Natural killer cell (primary cell): ENCODE measurements at regions of chrX and their contacts with region 1.

Region 1: GRCh38 chrX:1453951-1454785 is 1.5 kb upstream of the ASMTL start:
- DNase-seq: peak; percentile 93
- ATAC-seq: peak; percentile 30 to 43 (median 37)
- H3K4me3 ChIP-seq: peak overlapping the region; percentile 31
- H3K4me3 Mint-ChIP-seq: peak overlapping the region; percentile 26
- H3K27ac ChIP-seq: peak overlapping the region; percentile 80
- H3K27ac Mint-ChIP-seq: peak overlapping the region; percentile 42 to 92
- H3K4me1 ChIP-seq: peaks cover 48% of the 10 kb centered on the region
- H3K4me1 Mint-ChIP-seq: peaks cover 2 to 44% of the 10 kb centered on the region in 2 donors
- H3K27me3 ChIP-seq: no peaks in the 10 kb centered on the region
- H3K27me3 Mint-ChIP-seq: no peaks in the 10 kb centered on the region
- CTCF ChIP-seq: peak; percentile 99

Region 2: DNA sequence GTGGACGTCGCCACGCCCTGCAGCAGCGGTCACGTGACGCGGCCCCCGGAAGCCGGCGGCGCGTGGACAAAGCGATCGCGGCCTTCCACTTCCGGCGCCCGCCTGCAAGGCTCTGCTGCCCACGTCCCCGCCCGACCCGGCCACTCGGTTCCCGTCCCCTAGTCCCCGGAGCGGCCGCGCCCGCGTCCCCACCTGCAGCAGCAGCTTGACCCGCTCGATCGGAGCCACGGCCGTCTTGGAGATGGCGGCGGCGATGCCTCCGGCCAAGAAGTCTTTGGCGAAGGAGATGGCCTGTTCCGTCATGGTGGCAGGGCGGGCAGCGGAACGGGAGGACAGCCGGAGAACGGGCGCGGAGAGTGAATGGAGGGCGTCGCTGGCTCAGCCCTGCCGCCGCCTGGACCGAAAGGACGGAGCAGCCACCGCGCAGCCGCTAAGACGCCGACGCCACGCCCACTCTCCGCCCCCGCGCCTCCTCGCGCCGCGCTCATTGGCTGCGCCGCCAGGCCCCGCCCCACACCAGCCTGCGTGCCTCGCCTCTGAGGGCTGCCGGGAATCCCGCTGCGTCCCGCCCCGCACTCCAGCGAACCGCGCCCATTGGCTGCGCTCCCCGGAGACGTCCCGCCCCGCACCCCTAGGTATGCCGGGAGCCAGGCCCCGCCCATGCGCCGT is 62.3 kb before region 1 on chrX and contains the start of gene SLC25A6:
- intact Hi-C with region 1: loop called (anchors 1 kb)
- DNase-seq: peak; percentile 99 to 100
- ATAC-seq: peak; percentile 93 to 98 (median 93)
- H3K4me3 ChIP-seq: peak within 1 kb of the TSS; percentile 99
- H3K4me3 Mint-ChIP-seq: peak within 1 kb of the TSS; percentile 92
- H3K27ac ChIP-seq: peak within 1 kb of the TSS; percentile 95
- H3K27ac Mint-ChIP-seq: peak within 1 kb of the TSS; percentile 85 to 94
- H3K4me1 ChIP-seq: peaks cover 24% of the 10 kb centered on the region
- H3K4me1 Mint-ChIP-seq: peaks cover 37 to 61% of the 10 kb centered on the region in 2 donors
- H3K27me3 ChIP-seq: no peaks in the 10 kb centered on the region
- H3K27me3 Mint-ChIP-seq: no peaks in the 10 kb centered on the region
- CTCF ChIP-seq: no peak
- total RNA-seq, gene SLC25A6: 157 to 197 (median 178) TPM

Region 3: GRCh38 chrX:1507511-1508463 is 53.6 kb after region 1 on chrX:
- intact Hi-C with region 1: loop called (anchors 1 kb)
- DNase-seq: peak; percentile 71 to 86
- ATAC-seq: peak; percentile 81 to 90 (median 88)
- H3K4me3 ChIP-seq: no peak overlapping the region
- H3K4me3 Mint-ChIP-seq: peak overlapping the region; percentile 73
- H3K27ac ChIP-seq: peak overlapping the region; percentile 43
- H3K27ac Mint-ChIP-seq: no peak overlapping the region
- H3K4me1 ChIP-seq: peaks cover 53% of the 10 kb centered on the region
- H3K4me1 Mint-ChIP-seq: peaks cover 12 to 26% of the 10 kb centered on the region in 2 donors
- H3K27me3 ChIP-seq: no peaks in the 10 kb centered on the region
- H3K27me3 Mint-ChIP-seq: no peaks in the 10 kb centered on the region
- CTCF ChIP-seq: no peak

Region 4: DNA sequence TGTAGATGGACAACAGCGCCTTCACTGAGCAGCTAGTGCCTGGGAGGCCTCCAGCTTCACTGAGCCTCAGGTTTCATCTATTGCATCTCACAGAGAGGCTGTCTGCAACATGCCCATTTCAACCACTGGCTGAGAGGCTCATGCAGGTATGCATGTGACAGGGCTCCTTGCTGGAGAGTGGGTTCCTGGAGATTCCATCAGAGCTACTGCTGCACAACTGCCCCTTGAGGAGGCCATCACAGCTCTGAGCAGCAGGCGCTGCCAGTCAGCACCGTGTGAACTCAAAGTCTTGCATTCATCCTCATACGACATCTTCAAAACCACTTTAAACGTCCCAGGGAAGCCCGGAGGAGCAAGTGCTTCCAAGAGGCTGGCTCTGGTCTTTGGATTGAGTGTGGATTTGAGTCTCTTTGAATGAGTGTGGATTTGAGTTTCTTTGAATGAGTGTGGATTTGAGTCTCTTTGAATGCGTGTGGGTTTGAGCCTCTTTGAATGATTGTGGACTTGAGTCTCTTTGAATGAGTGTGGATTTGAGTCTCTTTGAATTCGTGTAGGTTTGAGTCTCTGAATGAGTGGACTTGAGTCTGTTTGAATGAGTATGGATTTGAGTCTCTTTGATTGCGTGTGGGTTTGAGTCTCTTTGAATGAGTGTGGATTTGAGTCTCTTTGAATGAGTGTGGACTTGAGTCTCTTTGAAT is 74.2 kb after region 1 on chrX:
- intact Hi-C with region 1: no loop called
- DNase-seq: no peak
- ATAC-seq: no peak
- H3K4me3 ChIP-seq: no peak overlapping the region
- H3K4me3 Mint-ChIP-seq: no peak overlapping the region
- H3K27ac ChIP-seq: no peak overlapping the region
- H3K27ac Mint-ChIP-seq: no peak overlapping the region
- H3K4me1 ChIP-seq: peaks cover 29% of the 10 kb centered on the region
- H3K4me1 Mint-ChIP-seq: peaks cover 0 to 6% of the 10 kb centered on the region in 2 donors
- H3K27me3 ChIP-seq: no peaks in the 10 kb centered on the region
- H3K27me3 Mint-ChIP-seq: no peaks in the 10 kb centered on the region
- CTCF ChIP-seq: no peak

Region 5: GRCh38 chrX:1580735-1581531 is 126.8 kb after region 1 on chrX:
- intact Hi-C with region 1: loop called (anchors 1 kb)
- DNase-seq: peak; percentile 70 to 87
- ATAC-seq: peak; percentile 95 to 99 (median 99)
- H3K4me3 ChIP-seq: no peak overlapping the region
- H3K4me3 Mint-ChIP-seq: no peak overlapping the region
- H3K27ac ChIP-seq: no peak overlapping the region
- H3K27ac Mint-ChIP-seq: peak overlapping the region in 1 of 2 donors; percentile 50
- H3K4me1 ChIP-seq: peaks cover 8% of the 10 kb centered on the region
- H3K4me1 Mint-ChIP-seq: peaks cover 8 to 11% of the 10 kb centered on the region in 2 donors
- H3K27me3 ChIP-seq: no peaks in the 10 kb centered on the region
- H3K27me3 Mint-ChIP-seq: no peaks in the 10 kb centered on the region
- CTCF ChIP-seq: peak; percentile 92

Region 6: GRCh38 chrX:2608638-2609430 is 1154.7 kb after region 1 on chrX:
- intact Hi-C with region 1: loop called (anchors 2 kb)
- DNase-seq: peak; percentile 68 to 91
- ATAC-seq: peak; percentile 90 to 97 (median 94)
- H3K4me3 ChIP-seq: peak overlapping the region; percentile 69
- H3K4me3 Mint-ChIP-seq: peak overlapping the region; percentile 94
- H3K27ac ChIP-seq: peak overlapping the region; percentile 47
- H3K27ac Mint-ChIP-seq: peak overlapping the region; percentile 65 to 87
- H3K4me1 ChIP-seq: peaks cover 26% of the 10 kb centered on the region
- H3K4me1 Mint-ChIP-seq: peaks cover 34 to 47% of the 10 kb centered on the region in 2 donors
- H3K27me3 ChIP-seq: no peaks in the 10 kb centered on the region
- H3K27me3 Mint-ChIP-seq: no peaks in the 10 kb centered on the region
- CTCF ChIP-seq: no peak